Activated T-helper 2 cell treated with anti-CD3 and anti-CD28 coated beads, Interferon-gamma antibody, Interleukin-2, Interleukin-4, amounts not matched to agents 10 μg/mL and 5 μg/mL and 100 μg/mL, durations not matched to agents 14 hours and 24 hours and 36 hours (primary cell): ENCODE measurements at regions of chr14 and their contacts with region 1.

Region 1: DNA sequence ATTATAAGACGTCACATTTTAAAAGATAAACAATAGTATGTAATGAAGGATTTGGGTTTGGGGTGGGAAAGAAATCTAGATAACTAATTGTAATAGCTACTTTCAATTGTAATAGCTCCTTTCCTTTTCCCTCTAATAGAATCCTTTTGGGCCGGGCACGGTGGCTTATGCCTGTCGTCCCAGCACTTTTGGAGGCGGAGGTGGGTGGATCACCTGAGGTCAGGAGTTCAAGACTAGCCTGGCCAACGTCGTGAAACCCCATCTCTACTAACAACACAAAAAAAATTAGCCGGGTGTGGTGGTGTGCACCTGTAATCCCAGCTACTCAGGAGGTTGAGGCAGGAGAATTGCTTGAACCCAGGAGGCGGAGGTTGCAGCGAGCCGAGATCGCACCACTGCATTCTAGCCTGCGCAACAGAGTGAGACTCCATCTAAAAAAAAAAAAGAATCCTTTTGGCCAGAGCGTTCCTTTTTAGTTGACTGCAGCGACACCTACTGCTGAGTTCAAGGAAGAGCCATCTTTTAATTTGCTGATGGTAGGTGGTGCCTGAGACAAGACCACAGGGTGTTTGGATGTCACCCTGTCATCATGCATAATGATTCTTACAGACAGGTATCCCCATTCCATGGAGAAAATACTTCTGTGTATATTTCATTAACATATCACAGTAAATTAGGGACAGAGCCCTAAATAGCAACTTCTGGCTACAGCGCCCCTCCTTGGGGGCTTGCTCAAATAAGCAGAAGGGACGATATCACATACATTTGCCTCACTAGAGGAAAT is 79.5 kb downstream of the ARMH4 start:
- DNase-seq: peak; percentile 22
- H3K4me3 Mint-ChIP-seq: no peak overlapping the region
- H3K27ac Mint-ChIP-seq: no peak overlapping the region
- H3K4me1 Mint-ChIP-seq: no peaks in the 10 kb centered on the region
- H3K27me3 Mint-ChIP-seq: peaks cover 4% of the 10 kb centered on the region

Region 2: GRCh38 chr14:57486767-57487379 is 585.6 kb before region 1 on chr14:
- intact Hi-C with region 1: loop called (anchors 5 kb)
- DNase-seq: no peak
- H3K4me3 Mint-ChIP-seq: no peak overlapping the region
- H3K27ac Mint-ChIP-seq: no peak overlapping the region
- H3K4me1 Mint-ChIP-seq: no peaks in the 10 kb centered on the region
- H3K27me3 Mint-ChIP-seq: no peaks in the 10 kb centered on the region

Region 3: GRCh38 chr14:57692671-57693070 is 379.8 kb before region 1 on chr14:
- intact Hi-C with region 1: loop called (anchors 5 kb)
- DNase-seq: no peak
- H3K4me3 Mint-ChIP-seq: no peak overlapping the region
- H3K27ac Mint-ChIP-seq: no peak overlapping the region
- H3K4me1 Mint-ChIP-seq: no peaks in the 10 kb centered on the region
- H3K27me3 Mint-ChIP-seq: no peaks in the 10 kb centered on the region

Region 4: GRCh38 chr14:57785058-57785457 is 287.4 kb before region 1 on chr14:
- intact Hi-C with region 1: no loop called
- DNase-seq: no peak
- H3K4me3 Mint-ChIP-seq: no peak overlapping the region
- H3K27ac Mint-ChIP-seq: no peak overlapping the region
- H3K4me1 Mint-ChIP-seq: no peaks in the 10 kb centered on the region
- H3K27me3 Mint-ChIP-seq: no peaks in the 10 kb centered on the region